ENCODE measurements at regions of chr11 and their contacts with region 1.

Region 1: GRCh38 chr11:19220903-19221724 is 19.3 kb upstream of the CSRP3 start:
- DNase-seq: peak in 1 of 2 experiments; percentile 38
- H3K4me3 ChIP-seq: no peak overlapping the region
- H3K4me3 Mint-ChIP-seq: peak overlapping the region; percentile 1
- H3K27ac Mint-ChIP-seq: peak overlapping the region; percentile 52
- H3K4me1 ChIP-seq: peaks cover 43% of the 10 kb centered on the region
- H3K4me1 Mint-ChIP-seq: peaks cover 36% of the 10 kb centered on the region
- H3K27me3 ChIP-seq: no peaks in the 10 kb centered on the region
- H3K27me3 Mint-ChIP-seq: no peaks in the 10 kb centered on the region
- CTCF ChIP-seq: no peak

Region 2: DNA sequence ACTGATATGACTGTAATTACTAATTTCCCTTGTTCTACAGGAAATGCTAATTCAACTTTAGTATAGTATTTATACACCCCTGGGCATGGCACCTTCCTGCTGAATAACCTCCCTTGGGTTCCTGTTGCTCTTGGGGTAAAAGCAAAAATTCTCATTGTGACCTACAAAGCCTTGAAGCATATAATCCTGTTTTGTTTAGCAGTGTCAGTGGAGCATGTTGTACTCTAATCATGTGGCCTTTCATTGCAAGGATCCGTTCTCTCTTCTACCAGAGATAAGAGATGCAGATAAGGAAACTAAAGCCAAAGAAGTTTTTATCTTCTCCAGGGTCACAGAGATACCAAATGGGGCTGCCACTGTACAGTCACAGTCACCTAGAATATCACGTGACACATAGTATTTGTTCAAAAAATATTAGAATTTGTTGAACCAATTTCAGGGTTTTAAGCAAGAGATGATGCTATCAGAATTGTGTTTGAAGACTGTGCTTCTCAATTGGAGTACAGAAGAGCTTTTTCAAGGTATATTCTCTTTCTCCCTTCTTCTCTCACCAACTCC is 44.4 kb before region 1 on chr11:
- CTCF ChIA-PET with region 1: no interaction called
- POLR2A ChIA-PET with region 1: no interaction called
- intact Hi-C with region 1: loop called (anchors 1 kb)
- DNase-seq: peak; percentile 44
- H3K4me3 ChIP-seq: no peak overlapping the region
- H3K4me3 Mint-ChIP-seq: no peak overlapping the region
- H3K27ac Mint-ChIP-seq: no peak overlapping the region
- H3K4me1 ChIP-seq: peaks cover 17% of the 10 kb centered on the region
- H3K4me1 Mint-ChIP-seq: peaks cover 20% of the 10 kb centered on the region
- H3K27me3 ChIP-seq: no peaks in the 10 kb centered on the region
- H3K27me3 Mint-ChIP-seq: no peaks in the 10 kb centered on the region
- CTCF ChIP-seq: no peak

Region 3: GRCh38 chr11:19209617-19210370 is 11.3 kb before region 1 on chr11:
- CTCF ChIA-PET with region 1: no interaction called
- POLR2A ChIA-PET with region 1: interaction called, 3 read pairs
- intact Hi-C with region 1: loop called (anchors 1 kb)
- DNase-seq: peak; percentile 71 to 82
- H3K4me3 ChIP-seq: no peak overlapping the region
- H3K4me3 Mint-ChIP-seq: peak overlapping the region; percentile 36
- H3K27ac Mint-ChIP-seq: peak overlapping the region; percentile 60
- H3K4me1 ChIP-seq: peaks cover 40% of the 10 kb centered on the region
- H3K4me1 Mint-ChIP-seq: peaks cover 28% of the 10 kb centered on the region
- H3K27me3 ChIP-seq: no peaks in the 10 kb centered on the region
- H3K27me3 Mint-ChIP-seq: no peaks in the 10 kb centered on the region
- CTCF ChIP-seq: no peak

Region 4: DNA sequence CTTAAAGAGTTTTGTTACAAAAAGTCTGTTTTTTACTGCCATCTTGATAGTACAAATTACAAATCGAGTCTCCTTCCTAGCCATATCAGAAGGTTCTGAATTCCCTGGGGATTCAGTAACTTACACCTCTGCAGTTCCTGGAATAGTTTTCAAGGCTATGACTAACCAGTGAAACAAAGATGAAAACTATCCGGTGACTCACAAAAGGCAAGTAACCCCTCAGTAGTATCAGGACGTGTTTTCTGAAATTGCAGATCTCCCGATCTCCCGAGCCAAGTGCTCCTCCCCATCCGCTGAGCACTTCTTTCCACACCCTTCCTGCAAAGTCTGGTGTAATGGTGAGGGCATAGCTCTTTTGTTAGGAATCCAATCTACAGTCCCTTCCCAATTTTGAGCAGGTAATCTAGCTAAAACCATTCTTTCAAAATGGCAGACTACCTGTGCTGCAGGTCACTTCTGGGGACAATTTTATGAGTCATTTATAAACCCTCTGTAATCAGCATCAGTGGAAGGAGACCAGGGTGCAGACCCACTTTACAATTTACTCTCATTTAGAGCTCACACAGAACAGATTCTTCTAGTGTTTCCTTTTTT is 11.9 kb after region 1 on chr11:
- CTCF ChIA-PET with region 1: no interaction called
- POLR2A ChIA-PET with region 1: no interaction called
- intact Hi-C with region 1: no loop called
- DNase-seq: no peak
- H3K4me3 ChIP-seq: no peak overlapping the region
- H3K4me3 Mint-ChIP-seq: no peak overlapping the region
- H3K27ac Mint-ChIP-seq: no peak overlapping the region
- H3K4me1 ChIP-seq: no peaks in the 10 kb centered on the region; the same call in 1 of the 2 replicates
- H3K4me1 Mint-ChIP-seq: peaks cover 7% of the 10 kb centered on the region
- H3K27me3 ChIP-seq: no peaks in the 10 kb centered on the region
- H3K27me3 Mint-ChIP-seq: no peaks in the 10 kb centered on the region
- CTCF ChIP-seq: no peak

Region 5: DNA sequence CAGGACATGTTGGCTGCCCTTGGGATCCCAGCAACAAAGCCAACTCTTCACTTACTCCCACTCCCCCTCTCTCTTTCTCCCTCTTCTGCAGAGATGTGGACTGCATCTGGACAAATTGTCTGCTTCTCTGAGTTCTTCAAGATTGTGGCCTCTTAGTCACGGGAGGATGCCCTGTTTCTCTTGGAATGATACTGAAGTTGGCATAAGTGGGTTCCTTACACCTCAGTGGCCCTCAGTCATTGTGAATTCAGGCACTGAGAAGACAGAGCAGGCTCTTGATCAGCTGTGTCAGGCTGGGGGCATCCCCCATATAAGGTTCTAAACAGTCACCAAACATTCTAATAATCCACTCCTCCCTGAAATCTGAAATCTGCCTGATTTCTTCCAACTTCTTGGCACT is 25.7 kb after region 1 on chr11:
- CTCF ChIA-PET with region 1: no interaction called
- POLR2A ChIA-PET with region 1: no interaction called
- intact Hi-C with region 1: no loop called
- DNase-seq: no peak
- H3K4me3 ChIP-seq: no peak overlapping the region
- H3K4me3 Mint-ChIP-seq: no peak overlapping the region
- H3K27ac Mint-ChIP-seq: no peak overlapping the region
- H3K4me1 ChIP-seq: peaks cover 38% of the 10 kb centered on the region
- H3K4me1 Mint-ChIP-seq: peaks cover 22% of the 10 kb centered on the region
- H3K27me3 ChIP-seq: no peaks in the 10 kb centered on the region
- H3K27me3 Mint-ChIP-seq: no peaks in the 10 kb centered on the region
- CTCF ChIP-seq: no peak